Activated CD4-positive, alpha-beta T cell treated with anti-CD3 and anti-CD28 coated beads, Interleukin-2, amount 10 ng/mL, durations not matched to agents 24 days and 14 days (primary cell): ENCODE measurements at regions of chr14 and their contacts with region 1.

Region 1: GRCh38 chr14:75249251-75249957 is 29.2 kb upstream of the FOS start:
- DNase-seq: peak; percentile 96
- H3K4me3 Mint-ChIP-seq: peak overlapping the region; percentile 66
- H3K27ac Mint-ChIP-seq: peak overlapping the region; percentile 88
- H3K4me1 Mint-ChIP-seq: peaks cover 49% of the 10 kb centered on the region
- H3K27me3 Mint-ChIP-seq: peaks cover 34% of the 10 kb centered on the region

Region 2: DNA sequence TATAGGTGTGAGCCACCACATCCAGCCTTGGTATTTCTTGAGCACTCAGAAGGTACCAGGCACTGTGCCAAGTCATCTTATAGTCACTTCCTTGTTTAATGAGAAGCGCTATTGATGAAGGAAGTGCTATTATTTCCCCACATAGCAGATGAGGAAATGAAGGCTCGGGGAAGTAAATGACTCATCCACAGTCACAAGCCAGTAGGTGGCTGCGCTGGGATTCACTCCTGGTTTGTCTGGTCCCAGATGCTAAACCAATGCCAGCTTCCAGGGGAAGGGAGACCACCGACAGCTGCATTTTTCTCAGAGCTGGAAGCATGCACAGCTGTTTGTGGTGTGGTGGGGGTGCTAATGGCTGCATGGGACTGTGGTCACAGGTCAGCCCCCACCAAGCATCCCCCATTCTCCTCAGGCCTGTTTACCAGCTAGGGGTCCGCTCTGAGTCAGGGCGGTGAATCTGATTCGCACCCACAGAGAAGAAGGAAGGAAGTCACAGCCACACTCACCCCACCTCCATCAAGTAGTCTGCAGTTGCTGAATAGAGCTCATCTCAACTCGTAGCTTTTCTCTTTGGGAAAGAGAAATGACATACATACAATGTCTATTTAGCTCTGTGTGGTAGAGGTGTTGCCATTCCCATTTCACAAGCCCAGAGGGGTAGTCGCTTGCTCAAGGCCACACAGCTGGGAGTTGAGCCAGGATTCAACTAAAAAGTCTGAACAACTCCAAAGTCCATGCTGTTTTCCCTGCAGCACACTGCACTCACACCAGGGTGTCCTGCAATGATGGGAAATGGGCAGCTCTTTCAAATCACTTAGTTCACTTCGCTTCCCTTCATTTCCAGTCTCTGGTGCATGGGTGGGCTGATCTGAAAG is 631.1 kb before region 1 on chr14:
- intact Hi-C with region 1: loop called (anchors 5 kb)
- DNase-seq: peak; percentile 83
- H3K4me3 Mint-ChIP-seq: peak overlapping the region; percentile 51
- H3K27ac Mint-ChIP-seq: peak overlapping the region; percentile 69
- H3K4me1 Mint-ChIP-seq: peaks cover 57% of the 10 kb centered on the region
- H3K27me3 Mint-ChIP-seq: peaks cover 25% of the 10 kb centered on the region

Region 3: GRCh38 chr14:75176142-75176820 is 73.1 kb before region 1 on chr14 and contains the start of gene TMED10:
- intact Hi-C with region 1: loop called (anchors 1 kb)
- DNase-seq: peak; percentile 97
- H3K4me3 Mint-ChIP-seq: peak within 1 kb of the TSS; percentile 92
- H3K27ac Mint-ChIP-seq: peak within 1 kb of the TSS; percentile 98
- H3K4me1 Mint-ChIP-seq: peaks cover 27% of the 10 kb centered on the region
- H3K27me3 Mint-ChIP-seq: peaks cover 8% of the 10 kb centered on the region
- total RNA-seq, gene TMED10: 192 and 200 TPM in 2 replicates

Region 4: GRCh38 chr14:75186953-75187352 is 62.5 kb before region 1 on chr14:
- intact Hi-C with region 1: no loop called
- DNase-seq: no peak
- H3K4me3 Mint-ChIP-seq: no peak overlapping the region
- H3K27ac Mint-ChIP-seq: no peak overlapping the region
- H3K4me1 Mint-ChIP-seq: peaks cover 5% of the 10 kb centered on the region
- H3K27me3 Mint-ChIP-seq: peaks cover 23% of the 10 kb centered on the region

Region 5: DNA sequence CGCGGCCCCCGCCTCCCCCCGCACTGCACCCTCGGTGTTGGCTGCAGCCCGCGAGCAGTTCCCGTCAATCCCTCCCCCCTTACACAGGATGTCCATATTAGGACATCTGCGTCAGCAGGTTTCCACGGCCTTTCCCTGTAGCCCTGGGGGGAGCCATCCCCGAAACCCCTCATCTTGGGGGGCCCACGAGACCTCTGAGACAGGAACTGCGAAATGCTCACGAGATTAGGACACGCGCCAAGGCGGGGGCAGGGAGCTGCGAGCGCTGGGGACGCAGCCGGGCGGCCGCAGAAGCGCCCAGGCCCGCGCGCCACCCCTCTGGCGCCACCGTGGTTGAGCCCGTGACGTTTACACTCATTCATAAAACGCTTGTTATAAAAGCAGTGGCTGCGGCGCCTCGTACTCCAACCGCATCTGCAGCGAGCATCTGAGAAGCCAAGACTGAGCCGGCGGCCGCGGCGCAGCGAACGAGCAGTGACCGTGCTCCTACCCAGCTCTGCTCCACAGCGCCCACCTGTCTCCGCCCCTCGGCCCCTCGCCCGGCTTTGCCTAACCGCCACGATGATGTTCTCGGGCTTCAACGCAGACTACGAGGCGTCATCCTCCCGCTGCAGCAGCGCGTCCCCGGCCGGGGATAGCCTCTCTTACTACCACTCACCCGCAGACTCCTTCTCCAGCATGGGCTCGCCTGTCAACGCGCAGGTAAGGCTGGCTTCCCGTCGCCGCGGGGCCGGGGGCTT is 29.2 kb after region 1 on chr14 and contains the start of gene FOS:
- intact Hi-C with region 1: loop called (anchors 1 kb)
- DNase-seq: peak; percentile 97
- H3K4me3 Mint-ChIP-seq: peak within 1 kb of the TSS; percentile 88
- H3K27ac Mint-ChIP-seq: peak within 1 kb of the TSS; percentile 98
- H3K4me1 Mint-ChIP-seq: peaks cover 40% of the 10 kb centered on the region
- H3K27me3 Mint-ChIP-seq: peaks cover 53% of the 10 kb centered on the region
- total RNA-seq, gene FOS: 26.5 and 29.6 TPM in 2 replicates

Region 6: DNA sequence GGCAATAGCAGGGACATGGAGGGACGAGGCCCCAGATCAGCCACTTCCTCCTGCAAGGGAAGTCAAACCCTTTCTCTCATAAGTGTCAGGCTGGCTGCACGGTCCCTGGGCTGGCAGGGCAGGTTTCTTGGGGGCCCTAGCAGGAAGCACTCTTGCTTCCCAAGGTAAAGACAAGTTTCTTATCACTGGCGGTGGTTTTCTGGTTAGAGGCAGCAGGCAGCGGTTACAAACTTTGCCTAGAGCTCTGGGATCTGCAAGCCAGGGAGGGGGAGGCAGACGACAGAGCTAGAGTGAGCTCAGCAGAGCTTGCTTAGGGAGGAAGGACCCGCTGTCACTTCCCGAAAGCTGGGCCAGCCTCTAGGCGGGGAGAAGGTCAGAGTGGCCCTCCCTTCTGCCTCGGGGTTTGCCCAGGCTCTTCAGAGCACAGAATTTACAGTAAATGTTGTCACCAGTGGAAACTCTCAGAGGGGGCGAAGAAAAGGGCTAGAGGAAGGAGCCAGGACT is 293.2 kb after region 1 on chr14:
- intact Hi-C with region 1: loop called (anchors 5 kb)
- DNase-seq: peak; percentile 94
- H3K4me3 Mint-ChIP-seq: peak overlapping the region; percentile 67
- H3K27ac Mint-ChIP-seq: peak overlapping the region; percentile 96
- H3K4me1 Mint-ChIP-seq: peaks cover 70% of the 10 kb centered on the region
- H3K27me3 Mint-ChIP-seq: no peaks in the 10 kb centered on the region